Calu3 (cell line): ENCODE measurements at regions of chr12 and their contacts with region 1.

Region 1: DNA sequence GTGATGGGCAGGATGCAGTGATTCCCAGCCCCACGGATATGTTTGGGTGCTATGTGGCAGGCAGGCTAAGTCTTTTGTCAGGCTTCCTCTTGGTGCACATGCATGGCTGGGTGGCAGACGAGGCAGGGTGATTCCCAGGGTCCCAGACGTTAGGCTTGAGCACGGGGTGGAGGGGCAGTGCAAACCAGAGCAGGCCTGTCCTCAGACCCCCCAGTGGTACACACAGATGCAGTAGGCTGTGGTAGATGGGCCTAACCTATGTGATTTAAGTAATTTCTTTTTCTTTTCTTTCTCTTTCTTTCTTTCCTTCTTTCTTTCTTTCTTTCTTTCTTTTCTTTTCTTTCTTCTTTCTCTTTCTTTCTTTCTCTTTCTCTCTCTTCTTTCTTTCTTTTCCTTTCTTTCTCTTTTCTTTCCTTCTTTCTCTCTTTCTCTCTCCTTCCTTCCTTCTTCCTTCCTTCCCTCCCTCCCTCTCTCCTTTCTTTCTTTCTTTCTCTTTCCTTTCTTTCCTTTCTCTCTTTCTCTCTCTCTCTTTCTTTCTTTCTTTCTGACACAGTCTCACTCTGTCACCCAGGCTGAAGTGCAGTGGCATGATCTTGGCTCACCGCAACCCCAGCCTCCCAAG is 41.6 kb downstream of the PIK3C2G start:
- DNase-seq: peak; percentile 29
- H3K4me3 Mint-ChIP-seq: peak overlapping the region; percentile 64
- H3K27ac Mint-ChIP-seq: peak overlapping the region; percentile 77
- H3K4me1 Mint-ChIP-seq: peaks cover 54% of the 10 kb centered on the region
- H3K27me3 Mint-ChIP-seq: no peaks in the 10 kb centered on the region
- CTCF ChIP-seq: no peak

Region 2: DNA sequence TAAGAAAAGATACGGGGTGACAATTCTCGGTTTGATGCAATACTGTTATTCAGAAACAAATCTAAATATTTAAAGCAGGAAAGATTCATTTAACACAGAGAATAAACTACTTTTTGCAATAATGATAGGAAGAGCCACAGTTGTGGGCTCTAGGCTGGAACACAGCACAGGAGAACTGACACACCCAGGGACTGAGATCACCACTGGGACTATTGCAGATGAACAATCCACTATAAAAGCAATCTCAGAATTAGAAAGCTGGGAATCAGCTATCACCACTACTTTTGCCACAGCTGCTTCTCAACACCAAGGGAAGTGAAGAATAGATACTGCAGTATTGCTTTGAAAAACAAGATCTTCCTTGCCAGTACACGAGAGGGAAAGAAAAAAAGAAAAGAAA is 45.7 kb before region 1 on chr12:
- CTCF ChIA-PET with region 1: interaction called, 3 read pairs
- intact Hi-C with region 1: loop called (anchors 2 kb)
- DNase-seq: no peak
- H3K4me3 Mint-ChIP-seq: peak overlapping the region; percentile 52
- H3K27ac Mint-ChIP-seq: peak overlapping the region; percentile 85
- H3K4me1 Mint-ChIP-seq: peaks cover 37% of the 10 kb centered on the region
- H3K27me3 Mint-ChIP-seq: no peaks in the 10 kb centered on the region
- CTCF ChIP-seq: no peak

Region 3: DNA sequence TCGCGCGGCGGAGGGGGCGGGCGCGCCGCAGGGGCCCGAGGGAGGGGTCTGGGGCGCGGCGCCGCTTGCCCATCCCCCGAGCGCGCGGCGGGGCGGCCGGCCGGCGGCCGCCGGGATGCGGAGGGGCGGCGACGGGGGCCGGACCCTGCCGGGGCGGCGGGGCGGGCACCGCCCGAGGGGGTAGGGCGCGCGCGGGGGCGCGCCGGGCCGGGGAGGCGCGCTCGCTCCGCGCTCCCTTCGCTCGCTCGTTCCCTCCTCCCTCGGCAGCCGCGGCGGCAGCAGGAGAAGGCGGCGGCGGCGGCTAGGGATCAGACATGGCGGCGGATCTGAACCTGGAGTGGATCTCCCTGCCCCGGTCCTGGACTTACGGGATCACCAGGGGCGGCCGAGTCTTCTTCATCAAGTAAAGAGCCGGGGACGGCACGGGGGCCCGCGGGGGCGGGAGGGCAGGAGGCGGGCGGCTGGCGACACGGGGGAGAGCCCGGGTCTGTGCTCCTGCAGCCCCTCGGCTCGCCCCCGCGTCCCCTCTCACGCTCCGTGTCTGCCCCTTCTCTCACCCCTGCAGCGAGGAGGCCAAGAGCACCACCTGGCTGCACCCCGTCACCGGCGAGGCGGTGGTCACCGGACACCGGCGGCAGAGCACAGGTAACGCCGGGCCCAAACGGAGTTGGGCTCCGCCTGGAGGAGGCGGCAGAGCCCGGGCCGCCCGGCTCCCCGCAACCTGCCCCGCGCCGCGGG is 826.7 kb after region 1 on chr12 and contains the start of gene PLEKHA5:
- CTCF ChIA-PET with region 1: no interaction called
- intact Hi-C with region 1: no loop called
- DNase-seq: peak; percentile 79
- H3K4me3 Mint-ChIP-seq: peak within 1 kb of the TSS; percentile 98
- H3K27ac Mint-ChIP-seq: peak within 1 kb of the TSS; percentile 85
- H3K4me1 Mint-ChIP-seq: peaks cover 23% of the 10 kb centered on the region
- H3K27me3 Mint-ChIP-seq: no peaks in the 10 kb centered on the region
- CTCF ChIP-seq: no peak
- total RNA-seq, gene PLEKHA5: 49.2 and 57.9 TPM in 2 replicates